ENCODE measurements at regions of chr11 and their contacts with region 1.

Region 1: GRCh38 chr11:128552783-128553661 is 34.3 kb downstream of the ETS1 start:
- DNase-seq: no peak
- ATAC-seq: peak in 3 of 8 donors; percentile 2 to 54 (median 23)
- H3K4me3 ChIP-seq: no peak overlapping the region
- H3K27ac ChIP-seq: peak overlapping the region in 7 of 10 donors; percentile 34 to 85 (median 50)
- H3K4me1 ChIP-seq: peaks cover 3 to 76% (median 56%) of the 10 kb centered on the region in 9 donors
- H3K27me3 ChIP-seq: no peaks in the 10 kb centered on the region
- CTCF ChIP-seq: no peak

Region 2: DNA sequence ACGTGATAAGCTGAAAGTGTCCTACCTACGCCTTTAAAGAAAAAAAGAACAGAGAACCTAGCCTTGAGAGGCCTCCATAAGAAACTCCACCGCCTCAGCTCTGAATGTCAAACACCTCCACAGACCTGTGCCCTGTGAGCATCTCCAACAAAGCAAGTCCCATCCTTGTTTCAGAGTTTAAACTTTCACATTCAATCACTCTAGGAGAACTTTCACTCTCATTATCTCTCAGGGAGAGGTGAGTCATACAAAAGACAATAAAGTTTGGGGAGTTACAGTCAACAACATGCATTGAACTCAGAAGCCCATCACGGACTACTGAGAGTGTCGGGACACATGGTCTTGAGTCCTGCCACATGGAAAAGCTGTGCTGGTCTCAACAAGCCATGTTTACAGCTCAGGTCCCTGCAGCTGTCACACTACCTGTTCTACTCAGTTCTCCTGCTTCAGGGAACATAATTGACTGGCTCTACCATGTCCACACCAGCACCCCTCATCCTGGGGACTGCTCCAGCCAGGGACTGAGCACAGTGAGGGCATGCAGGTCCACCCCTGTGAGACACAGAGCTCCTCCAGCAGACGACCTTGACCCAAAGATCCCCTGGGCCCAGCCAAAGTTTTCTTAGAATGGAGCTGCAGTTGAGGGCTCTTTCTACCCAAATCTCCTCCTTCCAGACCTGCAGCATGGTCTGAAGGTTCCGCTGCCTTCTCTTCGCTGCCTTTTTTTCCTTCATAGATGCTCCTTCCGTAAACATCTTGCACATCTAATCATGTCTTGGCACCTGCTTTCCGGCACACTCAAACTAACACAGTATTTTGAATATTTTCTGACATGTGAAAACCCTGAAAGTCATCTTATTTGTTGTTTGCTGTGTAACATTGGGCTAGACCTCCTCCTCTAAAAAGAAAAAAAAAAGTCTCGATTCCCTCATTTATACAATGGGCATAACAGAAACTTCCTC is 80.6 kb before region 1 on chr11:
- intact Hi-C with region 1: no loop called
- DNase-seq: no peak
- ATAC-seq: no peak
- H3K4me3 ChIP-seq: no peak overlapping the region
- H3K27ac ChIP-seq: peak overlapping the region in 7 of 10 donors; percentile 35 to 84 (median 50)
- H3K4me1 ChIP-seq: peaks cover 30 to 100% (median 96%) of the 10 kb centered on the region in 9 donors
- H3K27me3 ChIP-seq: no peaks in the 10 kb centered on the region
- CTCF ChIP-seq: no peak

Region 3: GRCh38 chr11:128506999-128507611 is 45.9 kb before region 1 on chr11:
- intact Hi-C with region 1: loop called in 1 of 10 experiments (anchors 5 kb)
- DNase-seq: peak; percentile 75 to 79
- ATAC-seq: peak; percentile 76 to 96 (median 80)
- H3K4me3 ChIP-seq: peak overlapping the region; percentile 8 to 48 (median 36)
- H3K27ac ChIP-seq: peak overlapping the region; percentile 79 to 97 (median 88)
- H3K4me1 ChIP-seq: peaks cover 30 to 100% (median 100%) of the 10 kb centered on the region in 9 donors
- H3K27me3 ChIP-seq: no peaks in the 10 kb centered on the region
- CTCF ChIP-seq: no peak

Region 4: GRCh38 chr11:128579798-128580504 is 26.9 kb after region 1 on chr11:
- intact Hi-C with region 1: no loop called
- DNase-seq: no peak
- ATAC-seq: no peak
- H3K4me3 ChIP-seq: no peak overlapping the region
- H3K27ac ChIP-seq: peak overlapping the region in 6 of 10 donors; percentile 16 to 66 (median 51)
- H3K4me1 ChIP-seq: peaks cover 3 to 96% (median 72%) of the 10 kb centered on the region in 9 donors
- H3K27me3 ChIP-seq: no peaks in the 10 kb centered on the region
- CTCF ChIP-seq: no peak

Region 5: DNA sequence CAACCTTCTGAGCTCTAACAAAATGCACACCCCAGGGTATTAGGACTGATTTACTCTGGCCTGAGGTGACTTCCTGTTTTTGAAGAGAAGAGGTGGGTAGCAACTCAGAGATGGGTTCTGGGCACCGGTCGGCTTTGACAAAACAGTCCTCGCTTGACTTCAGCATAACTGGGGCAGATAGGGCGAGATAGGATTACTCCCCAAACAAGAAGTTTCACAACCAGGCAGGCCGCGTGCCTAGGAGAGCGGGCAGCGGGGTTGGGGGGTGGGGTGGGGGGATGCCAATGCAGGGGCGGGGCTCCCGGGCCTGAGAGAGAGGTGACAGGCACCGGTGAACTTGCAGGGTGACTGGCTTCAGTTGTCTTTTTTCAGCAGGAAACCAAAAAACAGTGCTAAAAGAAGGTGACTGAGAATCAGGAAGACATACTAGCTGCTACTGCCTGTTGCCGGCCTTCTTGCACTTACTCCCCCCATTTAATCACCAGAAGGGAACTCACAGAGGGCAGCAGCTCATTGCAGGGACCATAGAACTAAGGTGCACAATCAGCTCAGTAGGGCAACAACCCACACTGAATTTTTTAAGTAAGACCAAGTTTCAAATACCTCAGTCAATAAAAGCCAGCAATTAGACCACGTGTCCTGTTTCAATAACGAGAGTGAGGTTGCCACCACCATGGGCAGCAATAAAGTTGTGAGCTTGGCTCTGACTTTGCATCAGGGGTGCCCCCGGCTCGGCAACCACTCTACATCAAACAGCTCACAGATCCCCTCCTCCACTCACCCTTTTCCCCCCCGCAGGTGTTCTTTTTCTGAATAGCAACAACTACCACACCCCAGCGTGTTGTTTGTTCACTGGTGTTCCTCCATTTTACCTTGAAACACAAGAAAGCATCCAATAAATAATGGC is 71.5 kb after region 1 on chr11:
- intact Hi-C with region 1: loop called in 4 of 10 experiments (anchors 5 kb)
- DNase-seq: no peak
- ATAC-seq: no peak
- H3K4me3 ChIP-seq: no peak overlapping the region
- H3K27ac ChIP-seq: peak overlapping the region in 1 of 10 donors; percentile 80
- H3K4me1 ChIP-seq: peaks cover 0 to 84% (median 14%) of the 10 kb centered on the region in 9 donors
- H3K27me3 ChIP-seq: no peaks in the 10 kb centered on the region
- CTCF ChIP-seq: no peak